Heart right ventricle (tissue), 16 donors: ENCODE measurements at regions of chr14 and their contacts with region 1.

Region 1: DNA sequence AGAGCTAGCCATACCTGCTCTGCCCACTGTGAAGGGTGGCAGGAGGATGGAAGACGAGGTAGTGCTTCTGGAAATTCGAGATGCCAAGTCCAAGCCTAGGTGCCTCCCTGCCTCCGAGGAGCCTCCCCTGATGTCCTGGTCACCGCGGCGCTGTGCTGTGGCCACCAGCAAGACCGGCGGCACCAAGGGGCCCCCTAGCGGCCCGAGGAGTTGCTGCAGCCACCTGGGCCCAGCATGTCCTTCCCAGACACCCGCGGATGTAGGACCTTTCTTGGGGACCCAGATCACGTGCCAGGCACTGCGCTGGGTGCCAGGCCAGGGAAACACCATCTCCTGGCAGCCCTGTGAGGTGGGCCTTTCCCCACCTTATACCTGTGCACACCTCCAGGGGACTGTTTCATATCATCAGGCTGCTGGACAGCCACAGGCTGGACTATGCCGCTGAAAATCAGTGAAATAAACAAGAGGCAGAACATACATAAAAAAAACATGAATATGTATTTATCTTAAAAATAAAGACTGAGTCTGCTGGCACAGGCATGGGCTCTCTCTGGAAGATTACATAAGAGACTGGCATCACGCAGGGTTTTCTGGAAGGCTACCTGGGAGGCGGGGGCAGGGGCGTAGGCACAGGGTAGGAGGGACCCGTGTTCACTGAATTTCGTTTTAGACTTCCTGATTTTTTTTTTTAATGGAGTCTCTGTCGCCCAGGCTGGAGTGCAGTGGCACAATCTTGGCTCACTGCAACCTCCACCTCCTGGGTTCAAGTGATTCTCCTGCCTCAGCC is 15.9 kb upstream of the HHIPL1 start:
- DNase-seq: peak; percentile 74 to 79
- ATAC-seq: peak; percentile 83 to 96 (median 93)
- H3K4me3 ChIP-seq: no peak overlapping the region
- H3K27ac ChIP-seq: no peak overlapping the region
- H3K4me1 ChIP-seq: peaks cover 0 to 8% (median 3%) of the 10 kb centered on the region in 9 donors
- H3K27me3 ChIP-seq: peaks cover 0 to 4% (median 0%) of the 10 kb centered on the region in 7 donors
- CTCF ChIP-seq: peak; percentile 95 to 99 (median 98)

Region 2: GRCh38 chr14:99518441-99519346 is 110.3 kb before region 1 on chr14:
- intact Hi-C with region 1: loop called (anchors 1 to 2 kb)
- DNase-seq: peak; percentile 59 to 82
- ATAC-seq: peak; percentile 46 to 76 (median 63)
- H3K4me3 ChIP-seq: no peak overlapping the region
- H3K27ac ChIP-seq: no peak overlapping the region
- H3K4me1 ChIP-seq: peaks cover 3 to 35% (median 24%) of the 10 kb centered on the region in 9 donors
- H3K27me3 ChIP-seq: no peaks in the 10 kb centered on the region
- CTCF ChIP-seq: peak; percentile 95 to 99 (median 97)

Region 3: GRCh38 chr14:99595034-99595433 is 34.0 kb before region 1 on chr14:
- intact Hi-C with region 1: no loop called
- DNase-seq: no peak
- ATAC-seq: no peak
- H3K4me3 ChIP-seq: no peak overlapping the region
- H3K27ac ChIP-seq: peak overlapping the region in 4 of 10 donors; percentile 11 to 79 (median 50)
- H3K4me1 ChIP-seq: peaks cover 48 to 99% (median 88%) of the 10 kb centered on the region in 9 donors
- H3K27me3 ChIP-seq: no peaks in the 10 kb centered on the region
- CTCF ChIP-seq: no peak